ENCODE measurements at regions of chr6 and their contacts with region 1.

Region 1: GRCh38 chr6:39166189-39166911 is 51.4 kb upstream of the SAYSD1 start:
- H3K4me3 ChIP-seq: no peak overlapping the region
- H3K27ac ChIP-seq: no peak overlapping the region
- H3K4me1 ChIP-seq: no peaks in the 10 kb centered on the region
- CTCF ChIP-seq: peak; percentile 96

Region 2: GRCh38 chr6:38997128-38997761 is 169.1 kb before region 1 on chr6:
- CTCF ChIA-PET with region 1: interaction called, 33 read pairs
- POLR2A ChIA-PET with region 1: no interaction called
- H3K4me3 ChIP-seq: no peak overlapping the region
- H3K27ac ChIP-seq: no peak overlapping the region
- H3K4me1 ChIP-seq: no peaks in the 10 kb centered on the region
- CTCF ChIP-seq: peak; percentile 42

Region 3: GRCh38 chr6:39003072-39003471 is 163.3 kb before region 1 on chr6:
- CTCF ChIA-PET with region 1: interaction called, 22 read pairs
- POLR2A ChIA-PET with region 1: no interaction called
- H3K4me3 ChIP-seq: no peak overlapping the region
- H3K27ac ChIP-seq: no peak overlapping the region
- H3K4me1 ChIP-seq: no peaks in the 10 kb centered on the region
- CTCF ChIP-seq: no peak

Region 4: DNA sequence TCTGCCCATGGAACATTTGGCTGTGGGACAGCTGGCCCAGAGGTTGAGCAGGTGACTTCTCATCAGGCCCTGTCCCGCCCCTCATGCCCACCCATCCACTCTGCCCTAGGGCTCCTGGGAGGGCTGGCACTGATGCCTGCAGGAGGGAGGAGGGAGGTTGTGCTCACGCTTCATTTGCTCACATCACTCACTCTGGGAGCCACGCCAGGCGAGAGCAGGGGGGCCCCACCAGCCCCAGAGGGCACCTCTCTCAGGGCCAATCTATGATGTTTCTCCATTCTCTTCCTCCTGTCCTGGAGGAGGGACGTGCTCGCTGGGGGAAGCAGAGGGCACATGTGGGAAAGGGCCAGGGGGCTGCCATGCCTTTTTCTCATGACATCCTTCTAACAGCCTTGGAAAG is 128.6 kb before region 1 on chr6:
- CTCF ChIA-PET with region 1: no interaction called
- POLR2A ChIA-PET with region 1: no interaction called
- H3K4me3 ChIP-seq: no peak overlapping the region
- H3K27ac ChIP-seq: no peak overlapping the region
- H3K4me1 ChIP-seq: no peaks in the 10 kb centered on the region
- CTCF ChIP-seq: no peak

Region 5: DNA sequence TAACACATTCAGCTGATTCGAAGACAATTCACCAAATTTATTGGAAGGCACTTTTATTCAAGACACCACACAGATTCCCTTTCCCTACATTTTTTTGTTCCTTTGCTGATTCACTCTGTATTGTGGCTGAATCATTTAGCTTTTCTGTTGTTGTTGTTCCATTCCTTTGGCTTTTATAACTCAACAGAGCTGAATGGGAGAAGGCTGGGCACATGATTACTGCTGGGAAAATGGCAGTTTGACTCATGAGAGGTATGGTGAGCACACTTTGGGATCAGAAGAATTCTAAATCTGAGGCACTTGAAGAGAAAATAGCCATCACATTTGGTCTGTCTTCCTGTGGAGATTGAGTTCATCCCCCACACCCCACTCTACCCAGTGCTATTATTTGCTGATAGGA is 35.7 kb before region 1 on chr6:
- CTCF ChIA-PET with region 1: no interaction called
- POLR2A ChIA-PET with region 1: no interaction called
- H3K4me3 ChIP-seq: no peak overlapping the region
- H3K27ac ChIP-seq: no peak overlapping the region
- H3K4me1 ChIP-seq: peaks cover 5% of the 10 kb centered on the region
- CTCF ChIP-seq: no peak

Region 6: DNA sequence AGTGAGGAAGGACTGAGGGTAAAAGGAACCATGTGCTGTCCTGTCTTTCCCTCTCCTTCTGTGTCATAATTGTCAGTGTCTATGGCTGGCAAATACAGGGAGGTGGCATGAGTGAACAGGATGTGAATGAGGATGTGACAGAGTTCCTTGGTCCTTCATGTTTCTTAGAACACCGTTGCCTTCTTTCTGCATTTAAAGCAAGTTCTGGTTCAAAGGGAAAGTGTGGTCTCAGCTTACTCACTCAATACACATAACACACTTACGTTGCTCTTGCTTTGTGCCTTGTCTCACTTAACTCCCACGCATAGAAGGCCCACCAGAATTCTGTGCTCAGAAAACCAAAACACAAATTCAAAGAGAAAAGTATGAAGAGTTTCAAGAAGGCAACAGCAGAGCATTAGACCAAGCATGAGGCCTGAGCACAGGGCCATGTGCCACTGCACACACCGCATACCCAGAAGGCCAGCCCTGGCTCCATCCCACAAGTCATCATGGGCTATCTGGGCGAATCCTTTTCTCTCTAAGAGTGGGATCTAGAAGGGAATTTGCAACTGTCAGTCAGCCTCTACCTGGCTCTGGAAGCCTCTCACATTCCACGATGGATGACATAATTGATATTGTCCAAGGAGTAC is 12.5 kb before region 1 on chr6:
- CTCF ChIA-PET with region 1: interaction called, 18 read pairs
- POLR2A ChIA-PET with region 1: no interaction called
- H3K4me3 ChIP-seq: no peak overlapping the region
- H3K27ac ChIP-seq: no peak overlapping the region
- H3K4me1 ChIP-seq: peaks cover 6% of the 10 kb centered on the region; the same call in 1 of the 2 replicates
- CTCF ChIP-seq: no peak

Region 7: DNA sequence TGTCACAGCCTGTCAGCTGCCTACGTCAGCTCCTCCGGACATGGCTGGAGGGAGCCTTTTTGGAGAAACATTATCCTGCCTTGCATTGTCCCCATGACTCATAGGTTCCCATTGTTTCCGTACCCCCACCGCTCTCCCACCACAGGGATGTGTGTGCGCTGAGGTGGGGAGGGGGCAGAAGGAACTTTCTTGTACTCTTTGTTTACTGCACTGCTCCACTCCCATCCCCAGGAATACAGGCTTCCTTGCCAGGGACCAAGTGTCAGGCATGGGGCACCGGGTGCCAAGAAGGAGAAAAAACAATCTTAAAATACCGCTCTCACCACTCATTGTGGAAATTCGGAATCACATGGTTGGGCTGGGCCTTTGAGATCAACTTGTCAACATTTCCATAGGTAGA is 11.9 kb after region 1 on chr6:
- CTCF ChIA-PET with region 1: interaction called, 16 read pairs
- POLR2A ChIA-PET with region 1: no interaction called
- H3K4me3 ChIP-seq: no peak overlapping the region
- H3K27ac ChIP-seq: no peak overlapping the region
- H3K4me1 ChIP-seq: no peaks in the 10 kb centered on the region
- CTCF ChIP-seq: no peak

Region 8: DNA sequence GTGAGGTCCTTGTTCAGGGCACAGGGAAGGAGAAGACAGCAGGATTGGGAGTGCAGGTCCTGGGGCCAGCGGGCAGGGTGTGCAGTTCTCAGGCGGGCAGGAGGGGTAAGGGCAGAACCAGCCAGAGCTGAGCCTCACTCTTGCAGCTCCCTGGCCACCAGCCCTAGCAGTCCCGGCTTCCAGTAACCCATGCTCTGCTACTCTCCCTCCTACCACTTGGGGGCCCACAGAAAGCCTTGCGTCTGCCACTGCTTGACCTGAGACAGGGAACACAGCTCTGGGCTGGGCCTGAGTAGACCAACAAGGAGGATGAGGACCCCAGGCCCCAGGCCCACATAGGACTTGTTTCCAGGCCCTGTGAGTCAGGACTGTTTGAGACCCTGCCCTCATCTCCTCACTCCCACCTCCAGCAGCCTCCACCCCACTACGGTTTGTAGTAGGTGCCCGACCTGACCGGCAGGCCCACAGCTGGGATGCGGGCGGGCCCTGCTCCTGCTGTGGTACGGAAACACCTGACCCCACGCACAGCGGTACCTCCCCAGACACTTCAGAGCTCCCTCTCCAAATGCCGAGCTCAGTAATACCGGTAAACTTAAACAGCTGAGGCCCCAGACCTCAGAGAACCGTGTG is 23.7 kb after region 1 on chr6:
- CTCF ChIA-PET with region 1: interaction called, 22 read pairs
- POLR2A ChIA-PET with region 1: no interaction called
- H3K4me3 ChIP-seq: no peak overlapping the region
- H3K27ac ChIP-seq: no peak overlapping the region
- H3K4me1 ChIP-seq: no peaks in the 10 kb centered on the region
- CTCF ChIP-seq: peak; percentile 73

Region 9: GRCh38 chr6:39249278-39249677 is 82.9 kb after region 1 on chr6:
- CTCF ChIA-PET with region 1: no interaction called
- POLR2A ChIA-PET with region 1: no interaction called
- H3K4me3 ChIP-seq: no peak overlapping the region
- H3K27ac ChIP-seq: no peak overlapping the region
- H3K4me1 ChIP-seq: peaks cover 8% of the 10 kb centered on the region; the same call in 1 of the 2 replicates
- CTCF ChIP-seq: no peak

Region 10: DNA sequence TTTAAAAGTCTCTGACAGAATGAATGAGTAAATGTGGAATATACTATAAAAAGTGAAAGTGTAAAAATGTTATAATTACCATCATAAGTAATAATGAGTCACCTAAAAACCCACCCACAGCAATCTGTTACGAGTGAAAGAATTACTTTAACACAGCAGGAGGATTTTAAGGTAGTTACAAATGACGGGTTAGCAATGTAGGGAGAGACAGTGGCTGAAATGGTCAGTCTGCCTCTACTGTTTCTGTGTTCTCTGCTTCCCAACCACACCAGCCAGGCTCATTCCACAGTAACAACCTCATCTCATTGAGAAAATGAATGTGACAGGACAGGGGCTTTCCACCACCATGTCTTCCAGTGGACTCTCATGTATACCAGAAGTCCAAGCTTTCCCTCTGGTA is 280.6 kb after region 1 on chr6:
- CTCF ChIA-PET with region 1: no interaction called
- POLR2A ChIA-PET with region 1: no interaction called
- H3K4me3 ChIP-seq: no peak overlapping the region
- H3K27ac ChIP-seq: no peak overlapping the region
- H3K4me1 ChIP-seq: no peaks in the 10 kb centered on the region
- CTCF ChIP-seq: no peak

Measured in HEK293 (cell line).